Activated CD4-positive, alpha-beta memory T cell treated with anti-CD3 and anti-CD28 coated beads for 36 hours (primary cell): ENCODE measurements at regions of chr15 and their contacts with region 1.

Region 1: DNA sequence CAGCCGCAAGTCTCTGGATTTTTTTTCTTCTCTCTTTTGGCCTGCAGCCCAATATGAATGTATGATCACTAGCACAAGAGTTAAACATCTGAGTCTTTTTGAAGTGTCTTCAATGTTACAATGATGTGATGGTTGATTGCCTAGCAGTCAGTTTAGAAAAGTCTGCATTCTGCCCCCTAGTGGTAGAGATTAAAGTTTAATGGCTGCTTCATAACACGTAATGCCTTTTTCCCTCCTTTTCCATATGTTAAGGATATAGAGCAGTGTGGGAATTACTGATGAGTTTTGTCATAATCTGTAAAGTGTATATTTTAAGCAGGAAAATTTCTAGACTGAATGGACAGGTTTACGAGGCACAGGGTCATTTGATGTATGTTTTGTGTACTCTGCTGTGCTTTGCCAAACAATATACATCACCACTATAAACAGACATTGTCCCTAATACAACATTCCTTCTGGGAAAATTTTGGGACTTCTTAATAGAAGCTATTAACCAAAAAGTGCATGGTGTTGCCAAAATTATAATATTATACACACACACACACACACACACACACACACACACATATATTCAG is 1038.5 kb upstream of the NR2F2 start:
- DNase-seq: no peak
- H3K4me3 Mint-ChIP-seq: no peak overlapping the region
- H3K27ac Mint-ChIP-seq: no peak overlapping the region
- H3K4me1 Mint-ChIP-seq: no peaks in the 10 kb centered on the region
- H3K27me3 Mint-ChIP-seq: peaks cover 17% of the 10 kb centered on the region

Region 2: GRCh38 chr15:94670438-94671034 is 621.4 kb before region 1 on chr15:
- CTCF ChIA-PET with region 1: interaction called, 5 read pairs
- POLR2A ChIA-PET with region 1: no interaction called
- intact Hi-C with region 1: loop called (anchors 1 kb)
- DNase-seq: no peak
- H3K4me3 Mint-ChIP-seq: no peak overlapping the region
- H3K27ac Mint-ChIP-seq: no peak overlapping the region
- H3K4me1 Mint-ChIP-seq: no peaks in the 10 kb centered on the region
- H3K27me3 Mint-ChIP-seq: peaks cover 9% of the 10 kb centered on the region

Region 3: DNA sequence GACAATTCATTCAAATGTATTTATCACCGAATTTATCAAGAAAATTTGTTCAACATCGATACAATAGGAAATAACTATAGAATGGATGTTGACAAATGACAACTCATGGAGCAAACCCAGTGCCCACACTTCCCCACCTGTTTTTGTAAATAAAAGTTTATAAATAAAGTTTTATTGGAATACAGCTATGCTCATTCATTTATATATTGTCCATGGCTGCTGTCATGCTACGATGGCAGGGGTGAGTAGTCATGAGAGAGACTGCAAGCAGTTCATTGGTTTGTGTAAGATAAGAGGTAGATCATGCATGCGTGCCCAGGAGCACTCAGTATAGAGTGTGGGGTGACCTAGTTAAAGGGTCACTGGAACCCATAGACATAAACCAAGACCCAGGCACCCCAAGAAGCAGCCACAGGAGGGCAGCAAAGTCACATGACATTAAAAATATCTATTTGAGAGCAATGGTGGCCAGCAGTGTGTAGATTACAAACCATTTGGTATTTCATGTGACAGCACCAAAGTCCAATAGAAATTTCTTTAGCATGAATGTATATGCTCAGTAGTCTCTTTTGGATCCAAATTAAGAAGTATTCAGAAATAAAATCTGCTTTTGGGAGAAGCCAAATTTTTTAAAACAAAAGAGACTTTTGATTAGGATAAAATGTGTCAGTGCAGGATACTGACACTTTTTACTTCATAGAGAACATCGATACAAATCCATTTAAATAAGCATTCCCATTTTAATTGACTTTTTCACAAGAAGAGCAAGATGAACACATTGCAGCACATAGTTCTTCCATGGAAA is 265.9 kb before region 1 on chr15:
- CTCF ChIA-PET with region 1: no interaction called
- POLR2A ChIA-PET with region 1: no interaction called
- intact Hi-C with region 1: loop called (anchors 2 kb)
- DNase-seq: peak; percentile 18
- H3K4me3 Mint-ChIP-seq: no peak overlapping the region
- H3K27ac Mint-ChIP-seq: no peak overlapping the region
- H3K4me1 Mint-ChIP-seq: no peaks in the 10 kb centered on the region
- H3K27me3 Mint-ChIP-seq: no peaks in the 10 kb centered on the region

Region 4: DNA sequence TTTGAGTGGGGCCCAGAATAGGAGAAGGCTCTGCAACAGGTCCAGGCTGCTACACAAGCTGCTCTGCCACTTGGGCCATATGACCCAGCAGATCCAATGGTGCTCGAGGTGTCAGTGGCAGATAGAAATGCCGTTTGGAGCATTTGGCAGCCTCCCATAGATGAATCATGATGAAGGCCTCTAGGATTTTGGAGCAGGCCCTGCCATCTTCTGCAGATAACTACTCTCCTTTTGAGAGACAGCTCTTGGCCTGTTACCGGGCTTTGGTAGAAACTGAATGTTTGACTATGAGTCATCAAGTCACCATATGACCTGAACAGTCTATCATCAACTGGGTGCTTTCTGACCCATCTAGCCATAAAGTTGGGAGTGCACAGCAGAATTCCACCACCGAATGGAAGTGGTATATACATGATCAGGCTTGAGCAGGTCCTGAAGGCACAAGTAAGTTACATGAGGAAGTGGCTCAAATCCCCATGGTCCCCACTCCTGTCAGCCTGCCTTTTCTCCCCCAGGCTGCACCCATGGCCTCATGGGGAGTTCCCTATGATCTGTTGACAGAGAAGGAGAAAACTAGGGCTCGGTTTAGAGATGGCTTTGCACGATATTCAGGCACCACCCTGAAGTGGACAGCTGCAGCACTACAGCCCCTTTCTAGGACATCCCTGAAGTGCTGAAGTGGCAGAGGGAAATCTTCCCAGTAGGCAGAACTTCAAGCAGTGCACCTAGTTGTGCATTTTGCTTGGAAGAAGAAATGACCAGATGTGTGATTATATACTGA is 89.2 kb before region 1 on chr15:
- CTCF ChIA-PET with region 1: no interaction called
- POLR2A ChIA-PET with region 1: no interaction called
- intact Hi-C with region 1: no loop called
- DNase-seq: no peak
- H3K4me3 Mint-ChIP-seq: no peak overlapping the region
- H3K27ac Mint-ChIP-seq: no peak overlapping the region
- H3K4me1 Mint-ChIP-seq: no peaks in the 10 kb centered on the region
- H3K27me3 Mint-ChIP-seq: no peaks in the 10 kb centered on the region

Region 5: GRCh38 chr15:95259513-95259912 is 32.5 kb before region 1 on chr15:
- CTCF ChIA-PET with region 1: interaction called, 3 read pairs
- POLR2A ChIA-PET with region 1: no interaction called
- intact Hi-C with region 1: loop called (anchors 1 kb)
- DNase-seq: peak; percentile 53
- H3K4me3 Mint-ChIP-seq: no peak overlapping the region
- H3K27ac Mint-ChIP-seq: no peak overlapping the region
- H3K4me1 Mint-ChIP-seq: no peaks in the 10 kb centered on the region
- H3K27me3 Mint-ChIP-seq: peaks cover 11% of the 10 kb centered on the region